A673 (cell line): ENCODE measurements at regions of chr7 and their contacts with region 1.

Region 1: GRCh38 chr7:38215735-38216670 is 38.0 kb downstream of the STARD3NL start:
- DNase-seq: peak; percentile 92
- H3K4me3 ChIP-seq: no peak overlapping the region
- H3K27ac ChIP-seq: no peak overlapping the region
- H3K4me1 ChIP-seq: peaks cover 24% of the 10 kb centered on the region
- H3K27me3 ChIP-seq: no peaks in the 10 kb centered on the region
- CTCF ChIP-seq: peak; percentile 97

Region 2: DNA sequence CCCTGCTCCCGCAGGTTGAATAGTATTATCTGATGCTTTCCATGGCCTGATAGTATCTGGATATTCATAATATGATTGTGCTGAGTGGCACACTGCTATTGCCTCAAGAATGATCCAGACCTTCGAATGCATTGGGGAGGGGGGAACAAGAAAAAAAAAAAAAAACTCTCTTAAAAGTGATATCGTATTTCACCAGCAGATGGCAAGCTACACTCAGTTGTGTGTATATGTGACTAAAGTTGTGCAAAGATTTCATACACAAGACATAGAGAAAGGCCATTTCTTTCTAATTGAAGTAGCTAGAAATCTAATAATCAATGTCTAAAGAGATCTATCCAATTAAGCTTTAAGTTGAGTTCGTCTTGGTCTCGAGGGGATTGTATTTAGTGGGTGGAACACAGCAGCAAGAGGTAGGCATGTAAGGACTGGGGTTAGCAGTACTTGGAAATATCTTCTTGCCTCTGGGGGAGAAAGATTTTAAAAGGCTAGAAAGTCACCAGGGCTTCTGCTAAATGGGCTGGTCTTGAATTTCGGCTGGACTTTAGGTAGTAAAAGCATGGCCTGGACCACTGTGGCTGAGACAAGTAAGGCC is 314.7 kb before region 1 on chr7:
- CTCF ChIA-PET with region 1: interaction called, 9 read pairs
- POLR2A ChIA-PET with region 1: interaction called, 7 read pairs
- intact Hi-C with region 1: loop called (anchors 5 kb)
- DNase-seq: peak; percentile 65
- H3K4me3 ChIP-seq: no peak overlapping the region
- H3K27ac ChIP-seq: no peak overlapping the region
- H3K4me1 ChIP-seq: no peaks in the 10 kb centered on the region
- H3K27me3 ChIP-seq: peaks cover 2% of the 10 kb centered on the region
- CTCF ChIP-seq: peak; percentile 73

Region 3: DNA sequence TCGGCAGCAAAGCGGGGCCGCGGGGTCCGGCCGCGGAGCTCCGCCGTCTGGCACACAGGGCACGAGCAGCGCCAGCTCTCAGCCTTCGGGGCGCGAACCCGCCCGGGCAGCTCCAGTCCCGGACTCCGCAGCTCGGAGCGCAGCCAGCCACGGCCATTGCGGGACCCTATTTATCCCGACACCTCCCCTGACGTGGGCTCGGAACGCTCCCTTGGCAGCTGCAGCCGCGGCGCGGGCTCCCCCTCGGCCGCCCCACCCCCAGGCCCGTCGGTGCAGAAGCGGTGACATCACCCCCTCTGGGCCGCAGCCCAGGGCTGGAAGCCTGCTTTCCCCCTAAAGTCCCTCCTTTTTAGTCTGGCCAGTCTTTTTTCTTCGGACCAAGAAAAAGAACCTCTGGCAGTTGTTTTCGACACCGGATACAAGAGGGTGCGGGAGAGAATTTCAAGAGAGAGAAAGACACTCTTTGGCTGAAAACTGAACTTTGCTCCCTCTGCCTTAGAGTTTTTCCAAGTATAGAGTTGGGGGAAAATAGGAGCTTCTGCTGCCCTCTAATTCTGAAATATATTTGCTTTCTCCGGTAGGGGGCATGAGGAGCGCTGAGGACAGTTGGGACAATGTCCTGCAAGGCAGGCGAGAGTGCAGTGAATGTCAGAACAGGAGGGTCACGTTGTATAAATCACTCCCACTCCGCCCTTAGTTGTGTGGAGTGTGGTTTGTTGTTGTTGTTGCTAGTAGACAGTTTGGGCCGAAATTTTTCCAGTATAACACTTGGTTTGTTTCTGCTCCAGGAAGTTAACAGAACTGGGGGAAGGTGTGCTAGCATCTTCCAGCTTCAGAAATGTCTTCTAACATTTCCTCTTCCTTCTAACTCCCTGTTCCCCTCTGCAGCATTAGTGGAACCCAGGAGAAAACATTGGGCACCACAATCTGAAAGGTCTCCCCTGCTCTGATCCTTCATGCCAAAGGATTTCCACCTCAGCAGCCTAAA is 299.0 kb before region 1 on chr7 and contains the start of gene SFRP4:
- CTCF ChIA-PET with region 1: interaction called, 4 read pairs
- POLR2A ChIA-PET with region 1: no interaction called
- intact Hi-C with region 1: loop called (anchors 5 kb)
- DNase-seq: peak; percentile 67
- H3K4me3 ChIP-seq: peak within 1 kb of the TSS; percentile 43
- H3K27ac ChIP-seq: no peak within 1 kb of the TSS
- H3K4me1 ChIP-seq: peaks cover 20% of the 10 kb centered on the region
- H3K27me3 ChIP-seq: peaks cover 42% of the 10 kb centered on the region
- CTCF ChIP-seq: peak; percentile 72
- total RNA-seq, gene SFRP4: not detected in 2 replicates

Region 4: DNA sequence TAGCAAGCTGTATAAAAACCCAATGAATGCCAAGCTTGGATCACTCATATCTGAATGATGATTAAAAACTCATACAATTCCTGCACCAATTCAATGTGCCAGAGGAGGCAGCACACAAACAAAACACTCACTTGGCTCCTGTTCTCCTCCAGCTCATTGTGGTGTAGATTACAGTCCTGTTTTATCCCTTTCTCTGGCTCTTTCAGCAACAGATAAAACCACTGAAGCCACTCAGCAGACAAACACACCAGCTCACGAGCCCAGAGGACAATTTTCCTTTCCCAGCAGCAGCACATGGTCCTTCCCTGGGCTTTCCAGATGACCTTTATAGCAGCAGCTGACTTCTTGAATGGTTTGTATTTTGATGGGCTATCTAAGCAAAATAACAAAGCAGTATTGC is 145.3 kb before region 1 on chr7:
- CTCF ChIA-PET with region 1: no interaction called
- POLR2A ChIA-PET with region 1: no interaction called
- intact Hi-C with region 1: no loop called
- DNase-seq: peak; percentile 15
- H3K4me3 ChIP-seq: no peak overlapping the region
- H3K27ac ChIP-seq: no peak overlapping the region
- H3K4me1 ChIP-seq: no peaks in the 10 kb centered on the region
- H3K27me3 ChIP-seq: peaks cover 2% of the 10 kb centered on the region
- CTCF ChIP-seq: peak; percentile 46; the same call in 1 of the 2 replicates

Region 5: GRCh38 chr7:38318803-38319416 is 102.9 kb after region 1 on chr7:
- CTCF ChIA-PET with region 1: interaction called, 21 read pairs
- POLR2A ChIA-PET with region 1: no interaction called
- intact Hi-C with region 1: loop called (anchors 2 kb)
- DNase-seq: peak; percentile 82
- H3K4me3 ChIP-seq: no peak overlapping the region
- H3K27ac ChIP-seq: no peak overlapping the region
- H3K4me1 ChIP-seq: no peaks in the 10 kb centered on the region
- H3K27me3 ChIP-seq: no peaks in the 10 kb centered on the region
- CTCF ChIP-seq: peak; percentile 79

Region 6: DNA sequence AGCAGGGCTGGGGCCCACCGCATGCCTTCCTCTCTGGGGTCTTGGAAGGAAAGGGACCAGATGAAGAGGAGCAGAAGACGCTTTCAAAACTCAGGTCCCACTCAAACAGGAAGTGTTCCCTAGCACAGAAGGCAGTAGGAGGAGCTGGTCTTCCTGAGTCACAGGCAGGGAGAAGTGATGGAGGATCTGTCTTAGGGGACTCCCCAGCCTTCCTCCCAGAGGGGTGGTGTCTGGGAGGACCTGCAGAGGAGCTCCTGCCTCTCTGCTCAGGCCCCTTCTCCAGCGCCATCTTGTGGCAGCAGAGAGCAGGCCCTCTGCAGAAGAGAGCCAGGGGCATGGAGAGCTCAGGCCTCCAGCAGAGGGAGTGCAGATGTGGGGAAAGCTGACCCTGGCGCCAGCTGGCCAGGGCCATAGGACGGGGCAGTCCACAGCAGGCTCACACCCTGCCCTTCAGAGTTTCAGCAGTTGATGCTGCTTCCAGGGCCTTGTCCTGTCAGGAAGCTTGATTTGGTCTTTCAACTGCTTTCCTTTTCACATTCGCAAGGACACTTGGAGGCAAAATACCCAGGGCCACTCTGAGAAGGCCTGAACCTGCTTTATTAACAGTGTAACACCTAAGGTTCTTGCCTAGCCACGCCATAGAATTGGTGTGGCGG is 119.6 kb after region 1 on chr7:
- CTCF ChIA-PET with region 1: interaction called, 50 read pairs
- POLR2A ChIA-PET with region 1: no interaction called
- intact Hi-C with region 1: loop called (anchors 2 kb)
- DNase-seq: peak; percentile 91
- H3K4me3 ChIP-seq: no peak overlapping the region
- H3K27ac ChIP-seq: no peak overlapping the region
- H3K4me1 ChIP-seq: peaks cover 8% of the 10 kb centered on the region
- H3K27me3 ChIP-seq: no peaks in the 10 kb centered on the region
- CTCF ChIP-seq: peak; percentile 98

Region 7: GRCh38 chr7:38369816-38370493 is 154.0 kb after region 1 on chr7:
- CTCF ChIA-PET with region 1: interaction called, 18 read pairs
- POLR2A ChIA-PET with region 1: no interaction called
- intact Hi-C with region 1: no loop called
- DNase-seq: peak; percentile 87
- H3K4me3 ChIP-seq: no peak overlapping the region
- H3K27ac ChIP-seq: no peak overlapping the region
- H3K4me1 ChIP-seq: no peaks in the 10 kb centered on the region
- H3K27me3 ChIP-seq: no peaks in the 10 kb centered on the region
- CTCF ChIP-seq: peak; percentile 96

Region 8: DNA sequence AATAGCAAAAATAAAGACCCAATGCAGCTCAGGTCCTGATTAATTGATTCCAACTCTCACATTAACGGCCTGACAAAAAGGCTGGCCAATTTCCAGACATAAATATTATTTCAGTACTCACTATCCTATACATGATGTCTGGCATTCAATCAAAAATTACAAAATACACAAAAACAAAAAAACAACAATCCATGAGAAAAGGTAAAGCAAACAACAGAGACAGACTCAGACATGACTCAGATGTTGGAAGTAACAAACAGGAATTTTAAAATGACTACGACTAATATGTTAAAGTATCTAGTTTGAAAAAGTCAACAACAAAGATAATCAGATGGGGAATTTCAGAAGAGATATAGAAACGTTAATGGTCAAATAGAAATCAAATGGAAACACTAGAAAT is 262.4 kb after region 1 on chr7:
- CTCF ChIA-PET with region 1: no interaction called
- POLR2A ChIA-PET with region 1: no interaction called
- intact Hi-C with region 1: no loop called
- DNase-seq: no peak
- H3K4me3 ChIP-seq: no peak overlapping the region
- H3K27ac ChIP-seq: no peak overlapping the region
- H3K4me1 ChIP-seq: no peaks in the 10 kb centered on the region
- H3K27me3 ChIP-seq: peaks cover 3% of the 10 kb centered on the region
- CTCF ChIP-seq: no peak